ENCODE measurements at regions of chr20 and their contacts with region 1.

Region 1: GRCh38 chr20:36421641-36422040 is 115.5 kb downstream of the DLGAP4 start:
- DNase-seq: peak; percentile 75
- H3K4me3 ChIP-seq: no peak overlapping the region
- H3K27ac ChIP-seq: no peak overlapping the region
- H3K4me1 ChIP-seq: no peaks in the 10 kb centered on the region
- H3K27me3 ChIP-seq: peaks cover 1% of the 10 kb centered on the region
- CTCF ChIP-seq: no peak

Region 2: DNA sequence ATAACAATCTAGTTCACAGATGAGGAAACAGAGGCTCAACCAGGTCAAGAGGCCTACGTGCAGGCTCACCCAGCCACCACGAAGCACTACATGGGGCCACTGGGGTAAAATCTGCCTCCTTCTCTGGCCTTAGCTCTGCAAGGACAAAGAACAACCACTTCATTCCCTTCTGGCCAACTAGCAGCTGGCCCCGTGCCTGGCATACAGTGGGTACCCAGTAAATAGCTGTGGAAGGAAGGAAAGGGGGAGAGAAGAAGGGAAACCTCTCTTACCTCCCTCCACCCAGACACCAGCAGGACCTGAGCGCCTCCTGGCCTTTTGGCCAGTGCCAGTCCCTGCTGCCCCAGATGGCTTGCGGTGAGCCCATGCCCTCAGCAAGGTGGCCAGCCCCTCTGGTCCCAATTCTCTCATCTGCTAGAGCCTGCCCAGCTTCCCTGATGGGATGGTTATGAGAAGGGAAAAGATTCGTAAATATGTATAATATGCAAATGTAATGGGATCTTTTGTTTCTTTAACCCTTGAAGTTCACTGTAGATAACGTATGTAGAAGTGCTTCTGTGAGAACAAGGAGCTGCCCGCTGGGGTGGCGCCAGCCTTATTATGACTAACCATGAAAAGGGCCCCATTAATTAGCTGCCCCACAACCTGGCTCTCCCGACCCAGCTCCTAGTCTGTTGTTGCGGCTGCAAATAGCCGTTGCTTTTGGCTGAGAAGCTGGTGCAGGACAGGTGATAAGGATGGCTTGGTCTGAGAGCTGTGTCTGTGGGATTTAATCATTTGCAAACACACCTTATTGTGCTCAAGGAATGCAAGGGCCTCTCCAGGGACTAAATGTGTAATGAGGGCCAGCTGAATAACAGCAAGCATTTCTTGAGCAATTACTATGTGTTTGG is 53.5 kb before region 1 on chr20:
- CTCF ChIA-PET with region 1: no interaction called
- dilution Hi-C with region 1: no loop called
- in situ Hi-C with region 1: loop called in 1 of 2 experiments (anchors 10 kb)
- intact Hi-C with region 1: no loop called
- DNase-seq: no peak
- H3K4me3 ChIP-seq: no peak overlapping the region
- H3K27ac ChIP-seq: no peak overlapping the region
- H3K4me1 ChIP-seq: no peaks in the 10 kb centered on the region
- H3K27me3 ChIP-seq: peaks cover 2% of the 10 kb centered on the region
- CTCF ChIP-seq: no peak

Measured in mammary epithelial cell (primary cell).